ENCODE measurements at regions of chr12 and their contacts with region 1.

Region 1: GRCh38 chr12:64610149-64610678 is at the start of gene RASSF3:
- DNase-seq: peak in 1 of 2 experiments; percentile 85
- H3K4me3 ChIP-seq: peak within 1 kb of the TSS; percentile 69 to 97 (median 91)
- H3K27ac ChIP-seq: peak within 1 kb of the TSS; percentile 65
- H3K4me1 ChIP-seq: peaks cover 0 to 5% (median 1%) of the 10 kb centered on the region in 4 experiments; a peak in 4 of 7 replicates
- H3K27me3 ChIP-seq: no peaks in the 10 kb centered on the region
- CTCF ChIP-seq: no peak
- EP300 ChIP-seq: no peak
- POLR2A ChIP-seq: no peak; a peak in 1 of 3 replicates
- RAD21 ChIP-seq: no peak
- total RNA-seq, gene RASSF3: 57.3 and 64.3 TPM in 2 replicates

Region 2: GRCh38 chr12:64544371-64545080 is 65.7 kb before region 1 on chr12:
- CTCF ChIA-PET with region 1: interaction called, 26 read pairs
- POLR2A ChIA-PET with region 1: interaction called, 14 read pairs
- DNase-seq: no peak
- H3K4me3 ChIP-seq: no peak overlapping the region
- H3K27ac ChIP-seq: no peak overlapping the region
- H3K4me1 ChIP-seq: peaks cover 0 to 3% (median 0%) of the 10 kb centered on the region in 4 experiments; a peak in 1 of 7 replicates
- H3K27me3 ChIP-seq: no peaks in the 10 kb centered on the region
- CTCF ChIP-seq: no peak
- EP300 ChIP-seq: no peak
- POLR2A ChIP-seq: no peak
- RAD21 ChIP-seq: no peak

Region 3: DNA sequence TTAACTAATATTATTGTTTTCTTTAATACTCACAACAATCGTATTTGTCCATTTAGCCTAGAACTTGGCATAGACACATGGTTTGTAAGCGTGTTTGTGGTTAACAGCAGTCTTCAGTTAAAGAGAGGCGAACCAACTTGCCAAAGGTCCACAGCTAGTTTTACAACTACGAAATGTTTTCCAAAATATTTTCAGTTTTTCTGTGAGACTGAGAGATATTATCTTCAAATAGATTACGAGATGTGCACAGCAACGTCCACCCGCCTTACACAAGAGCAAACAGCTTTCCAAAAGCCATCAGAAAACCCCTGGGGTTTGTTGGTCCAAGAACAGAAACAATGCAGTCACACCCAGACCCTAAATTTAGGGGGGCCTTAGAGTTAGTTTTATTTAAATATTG is 58.5 kb before region 1 on chr12:
- CTCF ChIA-PET with region 1: interaction called, 26 read pairs
- POLR2A ChIA-PET with region 1: no interaction called
- DNase-seq: no peak
- H3K4me3 ChIP-seq: no peak overlapping the region
- H3K27ac ChIP-seq: no peak overlapping the region
- H3K4me1 ChIP-seq: no peaks in the 10 kb centered on the region; a peak in 3 of 7 replicates
- H3K27me3 ChIP-seq: no peaks in the 10 kb centered on the region
- CTCF ChIP-seq: no peak
- EP300 ChIP-seq: no peak
- POLR2A ChIP-seq: no peak
- RAD21 ChIP-seq: no peak

Region 4: GRCh38 chr12:64566732-64567399 is 43.3 kb before region 1 on chr12:
- CTCF ChIA-PET with region 1: interaction called, 20 read pairs
- POLR2A ChIA-PET with region 1: interaction called, 3 read pairs
- DNase-seq: peak in 1 of 2 experiments; percentile 48
- H3K4me3 ChIP-seq: no peak overlapping the region
- H3K27ac ChIP-seq: no peak overlapping the region
- H3K4me1 ChIP-seq: peaks cover 5 to 15% (median 11%) of the 10 kb centered on the region in 4 experiments; a peak in 6 of 7 replicates
- H3K27me3 ChIP-seq: no peaks in the 10 kb centered on the region
- CTCF ChIP-seq: no peak
- EP300 ChIP-seq: no peak
- POLR2A ChIP-seq: no peak
- RAD21 ChIP-seq: no peak

Region 5: DNA sequence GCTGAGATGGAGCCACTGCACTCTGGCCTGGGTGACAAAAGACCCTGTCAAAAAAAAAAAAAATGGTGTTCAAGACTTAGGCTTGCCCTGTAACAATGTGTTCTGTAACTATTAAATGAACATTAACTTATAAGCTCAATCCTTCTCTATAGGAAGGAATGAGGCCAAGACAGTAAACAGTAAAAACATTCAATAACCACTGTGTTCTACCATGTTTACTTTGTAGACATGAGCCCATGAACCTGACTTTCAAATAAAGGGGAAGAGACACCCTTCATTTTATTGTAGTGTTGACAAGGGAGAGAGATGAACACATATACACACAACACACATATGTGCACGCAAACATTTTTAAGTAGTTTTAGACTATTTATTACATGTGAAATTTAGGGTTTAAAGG is 20.0 kb before region 1 on chr12:
- CTCF ChIA-PET with region 1: interaction called, 14 read pairs
- POLR2A ChIA-PET with region 1: interaction called, 8 read pairs
- DNase-seq: no peak
- H3K4me3 ChIP-seq: no peak overlapping the region
- H3K27ac ChIP-seq: no peak overlapping the region
- H3K4me1 ChIP-seq: no peaks in the 10 kb centered on the region
- H3K27me3 ChIP-seq: no peaks in the 10 kb centered on the region
- CTCF ChIP-seq: no peak
- EP300 ChIP-seq: no peak
- POLR2A ChIP-seq: no peak
- RAD21 ChIP-seq: no peak

Region 6: GRCh38 chr12:64596252-64596793 is 13.9 kb before region 1 on chr12:
- CTCF ChIA-PET with region 1: interaction called, 22 read pairs
- POLR2A ChIA-PET with region 1: interaction called, 8 read pairs
- DNase-seq: no peak
- H3K4me3 ChIP-seq: no peak overlapping the region
- H3K27ac ChIP-seq: no peak overlapping the region
- H3K4me1 ChIP-seq: no peaks in the 10 kb centered on the region
- H3K27me3 ChIP-seq: no peaks in the 10 kb centered on the region
- CTCF ChIP-seq: no peak
- EP300 ChIP-seq: no peak
- POLR2A ChIP-seq: no peak
- RAD21 ChIP-seq: no peak